ENCODE measurements at regions of chr2 and their contacts with region 1.

Region 1: DNA sequence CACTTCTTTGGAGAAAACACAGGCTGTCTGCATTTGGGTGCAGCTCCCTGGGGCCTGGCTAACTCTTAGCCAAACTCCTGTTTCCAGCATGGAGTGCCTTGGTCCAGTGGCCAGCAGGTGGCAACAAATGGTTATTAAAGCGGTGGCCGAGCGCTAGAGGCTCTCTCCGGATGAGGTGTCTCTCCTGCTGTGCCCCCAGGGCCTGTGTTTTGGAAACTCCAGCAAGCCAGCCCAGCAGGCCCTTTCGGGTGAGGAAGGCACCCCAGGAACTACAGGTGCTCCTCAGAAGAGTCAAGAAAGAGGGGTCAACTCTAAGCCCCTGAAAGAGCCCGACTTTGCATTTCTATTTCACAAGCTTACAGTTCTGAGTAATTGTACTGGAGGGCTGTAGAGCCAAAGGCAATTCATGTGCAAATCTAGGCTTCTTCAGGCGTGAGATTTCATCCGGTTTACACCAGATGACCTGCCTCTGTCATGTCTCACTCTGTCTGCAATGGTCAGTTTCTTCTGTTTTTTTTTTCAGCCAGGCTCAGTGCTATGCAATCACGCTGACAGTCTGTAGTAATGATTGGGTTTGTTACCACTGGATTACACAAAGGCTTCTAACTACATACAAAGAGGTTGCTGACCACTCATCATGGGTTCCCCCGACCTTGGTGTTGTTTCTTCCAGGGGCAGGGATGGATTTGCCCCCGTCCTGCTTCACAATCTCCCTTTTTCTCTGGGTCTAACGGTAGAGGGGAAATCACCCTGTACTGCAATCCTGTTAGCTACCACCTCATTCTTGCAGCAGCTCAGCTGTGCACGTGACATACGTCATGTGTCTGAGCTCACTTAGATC is 7.6 kb upstream of the CHRNA1 start:
- DNase-seq: peak; percentile 84 to 91 (median 86)
- H3K4me3 ChIP-seq: peak overlapping the region in 2 of 3 donors; percentile 40 to 41
- H3K27ac ChIP-seq: no peak overlapping the region
- H3K4me1 ChIP-seq: peaks cover 0 to 6% (median 0%) of the 10 kb centered on the region in 3 donors
- H3K27me3 ChIP-seq: no peaks in the 10 kb centered on the region
- CTCF ChIP-seq: peak; percentile 86

Region 2: DNA sequence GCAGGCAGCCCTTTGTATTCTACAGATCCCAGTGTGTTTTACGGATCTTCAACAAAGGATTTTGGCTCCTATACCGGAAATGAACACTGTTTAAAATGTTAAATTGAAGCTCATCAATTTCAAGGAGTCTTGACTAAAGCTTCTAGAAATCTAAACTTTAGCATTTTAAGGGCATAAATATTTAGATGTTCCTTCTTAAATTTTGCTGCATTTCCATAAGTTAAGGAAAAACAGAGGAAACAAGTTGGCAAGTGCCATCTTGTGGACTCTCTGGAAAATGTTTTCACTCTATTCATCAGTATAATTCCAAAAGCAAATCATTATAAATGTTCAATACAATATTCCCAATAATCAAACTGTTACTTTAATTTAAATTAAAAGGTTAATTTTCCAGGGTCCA is 213.8 kb after region 1 on chr2:
- intact Hi-C with region 1: loop called (anchors 10 kb)
- DNase-seq: peak in 2 of 5 donors; percentile 46
- H3K4me3 ChIP-seq: no peak overlapping the region
- H3K27ac ChIP-seq: no peak overlapping the region
- H3K4me1 ChIP-seq: no peaks in the 10 kb centered on the region
- H3K27me3 ChIP-seq: no peaks in the 10 kb centered on the region
- CTCF ChIP-seq: peak; percentile 46